IMR-90 (cell line): ENCODE measurements at regions of chr11 and their contacts with region 1.

Region 1: GRCh38 chr11:60265373-60266214 is 14.9 kb upstream of the MS4A4A start:
- DNase-seq: peak; percentile 7
- ATAC-seq: peak; percentile 42; the same call in 1 of the 2 replicates
- H3K4me3 ChIP-seq: no peak overlapping the region
- H3K27ac ChIP-seq: no peak overlapping the region
- H3K4me1 ChIP-seq: no peaks in the 10 kb centered on the region
- H3K27me3 ChIP-seq: no peaks in the 10 kb centered on the region
- CTCF ChIP-seq: peak; percentile 61
- POLR2A ChIP-seq: no peak
- RAD21 ChIP-seq: peak; percentile 44

Region 2: DNA sequence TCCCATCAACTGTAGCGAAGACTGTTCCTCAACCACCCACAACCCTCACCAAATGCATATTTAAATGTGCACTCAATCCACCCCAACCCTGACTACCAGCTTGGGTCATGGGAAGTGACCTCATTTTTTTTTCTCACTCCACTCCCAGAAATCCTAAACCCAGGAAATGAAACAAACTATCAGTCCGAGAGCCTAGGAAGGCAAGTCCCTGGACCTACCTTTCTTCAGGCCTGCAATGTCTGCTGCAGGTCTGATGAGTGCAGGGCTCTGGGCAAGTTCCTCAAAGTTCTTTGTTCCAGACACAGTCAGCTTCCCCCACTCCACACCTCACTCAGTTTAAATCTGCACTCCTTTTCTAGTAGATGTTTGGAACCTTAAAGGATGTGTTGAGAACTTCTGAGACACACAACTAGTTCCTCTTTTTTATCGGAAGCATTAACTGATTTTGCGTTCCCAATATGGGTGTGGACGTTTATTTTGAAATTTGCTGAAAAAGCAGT is 22.8 kb before region 1 on chr11 and contains the start of gene MS4A4E:
- CTCF ChIA-PET with region 1: no interaction called
- POLR2A ChIA-PET with region 1: no interaction called
- dilution Hi-C with region 1: no loop called
- in situ Hi-C with region 1: no loop called
- intact Hi-C with region 1: no loop called
- DNase-seq: no peak
- ATAC-seq: no peak
- H3K4me3 ChIP-seq: no peak within 1 kb of the TSS
- H3K27ac ChIP-seq: no peak within 1 kb of the TSS
- H3K4me1 ChIP-seq: no peaks in the 10 kb centered on the region
- H3K27me3 ChIP-seq: no peaks in the 10 kb centered on the region
- CTCF ChIP-seq: no peak
- POLR2A ChIP-seq: no peak
- RAD21 ChIP-seq: no peak
- total RNA-seq, gene MS4A4E: not detected in 2 replicates

Region 3: DNA sequence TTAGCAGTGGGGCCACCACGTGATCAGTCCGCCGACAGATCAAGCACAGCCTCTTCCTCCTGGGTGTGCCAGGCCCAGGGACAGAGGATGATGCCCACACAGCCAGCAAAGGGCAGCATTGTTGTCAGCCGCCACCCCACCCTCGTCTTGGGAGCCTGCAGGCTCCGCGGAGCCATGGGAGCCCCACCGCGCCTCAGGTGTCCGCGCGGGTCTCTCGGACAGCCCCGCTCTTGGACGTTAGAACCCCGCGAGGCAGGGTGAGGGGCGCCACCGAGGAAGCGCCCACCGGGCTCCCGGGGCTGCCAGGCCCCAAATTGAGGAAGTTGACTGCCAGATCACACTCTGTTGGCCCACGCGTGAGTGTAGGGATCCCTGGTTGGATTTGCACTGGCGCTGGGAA is 349.9 kb after region 1 on chr11:
- CTCF ChIA-PET with region 1: no interaction called
- POLR2A ChIA-PET with region 1: no interaction called
- dilution Hi-C with region 1: no loop called
- in situ Hi-C with region 1: no loop called
- intact Hi-C with region 1: loop called (anchors 10 kb)
- DNase-seq: no peak
- ATAC-seq: no peak
- H3K4me3 ChIP-seq: no peak overlapping the region
- H3K27ac ChIP-seq: no peak overlapping the region
- H3K4me1 ChIP-seq: no peaks in the 10 kb centered on the region
- H3K27me3 ChIP-seq: no peaks in the 10 kb centered on the region
- CTCF ChIP-seq: no peak
- POLR2A ChIP-seq: no peak
- RAD21 ChIP-seq: no peak